ENCODE measurements at regions of chr4 and their contacts with region 1.

Region 1: GRCh38 chr4:15001869-15002658 is at the start of gene CPEB2:
- DNase-seq: peak; percentile 97
- ATAC-seq: peak; percentile 62
- H3K4me3 ChIP-seq: peak within 1 kb of the TSS; percentile 82 to 99 (median 94)
- H3K4me3 Mint-ChIP-seq: peak within 1 kb of the TSS; percentile 93
- H3K27ac ChIP-seq: peak within 1 kb of the TSS; percentile 100
- H3K27ac Mint-ChIP-seq: peak within 1 kb of the TSS; percentile 98
- H3K4me1 ChIP-seq: peaks cover 10 to 12% of the 10 kb centered on the region in 2 donors
- H3K4me1 Mint-ChIP-seq: peaks cover 21% of the 10 kb centered on the region
- H3K27me3 ChIP-seq: no peaks in the 10 kb centered on the region
- H3K27me3 Mint-ChIP-seq: no peaks in the 10 kb centered on the region
- CTCF ChIP-seq: no peak
- total RNA-seq, gene CPEB2: 17.6 and 18.0 TPM in 2 replicates

Region 2: GRCh38 chr4:13611283-13611842 is 1390.7 kb before region 1 on chr4:
- CTCF ChIA-PET with region 1: interaction called, 3 read pairs
- POLR2A ChIA-PET with region 1: no interaction called
- intact Hi-C with region 1: loop called (anchors 5 kb)
- DNase-seq: peak; percentile 83
- ATAC-seq: peak; percentile 92
- H3K4me3 ChIP-seq: peak overlapping the region in 1 of 5 experiments; percentile 47
- H3K4me3 Mint-ChIP-seq: peak overlapping the region; percentile 71
- H3K27ac ChIP-seq: peak overlapping the region; percentile 84 to 92
- H3K27ac Mint-ChIP-seq: peak overlapping the region; percentile 88
- H3K4me1 ChIP-seq: peaks cover 48 to 55% of the 10 kb centered on the region in 2 donors
- H3K4me1 Mint-ChIP-seq: peaks cover 54% of the 10 kb centered on the region
- H3K27me3 ChIP-seq: no peaks in the 10 kb centered on the region
- H3K27me3 Mint-ChIP-seq: no peaks in the 10 kb centered on the region
- CTCF ChIP-seq: no peak

Region 3: GRCh38 chr4:14125375-14126129 is 876.5 kb before region 1 on chr4:
- CTCF ChIA-PET with region 1: no interaction called
- POLR2A ChIA-PET with region 1: no interaction called
- intact Hi-C with region 1: loop called (anchors 10 kb)
- DNase-seq: peak; percentile 60
- ATAC-seq: peak; percentile 87
- H3K4me3 ChIP-seq: no peak overlapping the region
- H3K4me3 Mint-ChIP-seq: peak overlapping the region; percentile 6
- H3K27ac ChIP-seq: no peak overlapping the region
- H3K27ac Mint-ChIP-seq: no peak overlapping the region
- H3K4me1 ChIP-seq: peaks cover 19 to 23% of the 10 kb centered on the region in 2 donors
- H3K4me1 Mint-ChIP-seq: peaks cover 22% of the 10 kb centered on the region
- H3K27me3 ChIP-seq: no peaks in the 10 kb centered on the region
- H3K27me3 Mint-ChIP-seq: no peaks in the 10 kb centered on the region
- CTCF ChIP-seq: no peak

Region 4: GRCh38 chr4:15020502-15021286 is 18.6 kb after region 1 on chr4:
- CTCF ChIA-PET with region 1: interaction called, 3 read pairs
- POLR2A ChIA-PET with region 1: no interaction called
- intact Hi-C with region 1: loop called (anchors 2 kb)
- DNase-seq: peak; percentile 22
- ATAC-seq: peak; percentile 64
- H3K4me3 ChIP-seq: no peak overlapping the region
- H3K4me3 Mint-ChIP-seq: no peak overlapping the region
- H3K27ac ChIP-seq: no peak overlapping the region
- H3K27ac Mint-ChIP-seq: no peak overlapping the region
- H3K4me1 ChIP-seq: peaks cover 4 to 5% of the 10 kb centered on the region in 2 donors
- H3K4me1 Mint-ChIP-seq: peaks cover 15% of the 10 kb centered on the region
- H3K27me3 ChIP-seq: no peaks in the 10 kb centered on the region
- H3K27me3 Mint-ChIP-seq: no peaks in the 10 kb centered on the region
- CTCF ChIP-seq: no peak

Region 5: DNA sequence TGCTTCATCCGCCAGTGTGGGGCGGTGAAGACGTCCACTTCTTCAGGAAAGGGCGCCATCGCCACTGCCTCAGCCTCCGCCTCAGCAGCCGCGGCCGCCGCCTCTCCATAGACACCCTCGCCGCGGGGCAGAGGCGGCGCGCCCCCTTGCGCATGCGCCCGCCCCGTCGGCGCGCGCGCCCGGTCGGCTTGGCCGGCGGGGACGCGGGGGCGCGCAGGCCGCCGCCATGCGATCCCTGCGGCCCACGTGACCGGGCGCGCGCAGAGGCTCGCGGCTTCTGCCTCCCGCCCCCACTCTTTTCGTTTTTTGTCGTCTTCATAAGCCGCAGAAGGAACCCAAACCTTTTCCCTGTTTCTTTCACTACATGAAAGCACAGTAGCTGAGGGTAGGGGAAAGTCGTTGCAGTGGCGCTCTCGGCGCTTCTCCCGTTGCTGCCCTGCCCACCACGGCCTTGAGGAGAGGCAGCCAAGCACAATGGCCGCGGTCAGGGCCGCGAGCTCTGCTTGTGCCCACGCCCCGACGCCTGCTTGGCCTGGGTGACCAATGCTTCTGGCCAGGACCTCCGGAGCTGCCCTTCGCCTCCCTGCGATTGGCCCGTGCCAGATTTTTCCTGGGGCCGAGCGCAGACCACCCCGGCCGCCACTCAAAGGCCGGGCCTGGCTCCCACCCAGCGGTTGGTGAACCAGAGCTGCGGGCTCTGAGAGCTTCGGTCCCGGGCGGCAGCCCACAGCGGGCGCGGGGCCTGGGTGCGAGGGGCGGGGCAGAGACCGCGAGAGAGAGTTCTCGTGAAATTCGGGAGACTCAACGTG is 653.4 kb after region 1 on chr4 and contains the start of gene FBXL5:
- CTCF ChIA-PET with region 1: no interaction called
- POLR2A ChIA-PET with region 1: interaction called, 4 read pairs
- intact Hi-C with region 1: loop called (anchors 1 kb)
- DNase-seq: peak; percentile 94
- ATAC-seq: peak; percentile 80
- H3K4me3 ChIP-seq: peak within 1 kb of the TSS; percentile 74 to 87 (median 85)
- H3K4me3 Mint-ChIP-seq: peak within 1 kb of the TSS; percentile 97
- H3K27ac ChIP-seq: peak within 1 kb of the TSS; percentile 88 to 97
- H3K27ac Mint-ChIP-seq: peak within 1 kb of the TSS; percentile 99
- H3K4me1 ChIP-seq: peaks cover 29 to 39% of the 10 kb centered on the region in 2 donors
- H3K4me1 Mint-ChIP-seq: peaks cover 42% of the 10 kb centered on the region
- H3K27me3 ChIP-seq: no peaks in the 10 kb centered on the region
- H3K27me3 Mint-ChIP-seq: no peaks in the 10 kb centered on the region
- CTCF ChIP-seq: no peak
- total RNA-seq, gene FBXL5: 41.0 and 41.9 TPM in 2 replicates